Heart right ventricle (tissue), 16 donors: ENCODE measurements at regions of chr3 and their contacts with region 1.

Region 1: GRCh38 chr3:194141415-194142155 is 5.6 kb downstream of the HES1 start:
- DNase-seq: peak; percentile 93
- ATAC-seq: peak; percentile 66 to 89 (median 76)
- H3K4me3 ChIP-seq: peak overlapping the region in 8 of 10 donors; percentile 26 to 57 (median 52)
- H3K27ac ChIP-seq: peak overlapping the region; percentile 91 to 97 (median 94)
- H3K4me1 ChIP-seq: peaks cover 18 to 61% (median 47%) of the 10 kb centered on the region in 9 donors
- H3K27me3 ChIP-seq: peaks cover 0 to 76% (median 0%) of the 10 kb centered on the region in 7 donors
- CTCF ChIP-seq: peak in 3 of 9 donors; percentile 19 to 34 (median 24)

Region 2: GRCh38 chr3:192652727-192653126 is 1488.9 kb before region 1 on chr3:
- intact Hi-C with region 1: no loop called
- DNase-seq: no peak
- ATAC-seq: no peak
- H3K4me3 ChIP-seq: no peak overlapping the region
- H3K27ac ChIP-seq: peak overlapping the region in 9 of 10 donors; percentile 32 to 74 (median 63)
- H3K4me1 ChIP-seq: peaks cover 0 to 14% (median 6%) of the 10 kb centered on the region in 9 donors
- H3K27me3 ChIP-seq: no peaks in the 10 kb centered on the region
- CTCF ChIP-seq: no peak

Region 3: DNA sequence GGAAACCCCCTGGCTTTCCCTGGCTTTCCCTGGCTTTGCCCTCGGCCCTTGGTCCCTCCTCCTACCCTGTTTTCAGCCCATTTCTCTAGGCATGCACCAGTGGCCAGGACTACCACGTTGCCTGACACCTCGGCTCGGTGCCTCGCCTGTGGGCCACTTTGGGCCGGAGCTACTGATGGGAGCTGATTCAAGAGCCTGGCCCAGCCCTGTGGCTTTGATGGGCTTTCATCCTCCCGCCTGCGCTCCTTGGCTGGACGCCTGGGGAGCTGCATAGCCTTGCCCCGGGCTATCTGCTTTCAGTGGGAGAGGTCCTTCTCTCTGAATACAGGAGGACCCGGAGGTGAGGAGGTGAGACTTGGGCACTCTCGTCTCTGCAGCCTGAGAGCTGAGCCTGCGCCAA is 198.4 kb before region 1 on chr3:
- intact Hi-C with region 1: no loop called
- DNase-seq: no peak
- ATAC-seq: no peak
- H3K4me3 ChIP-seq: no peak overlapping the region
- H3K27ac ChIP-seq: no peak overlapping the region
- H3K4me1 ChIP-seq: peaks cover 0 to 9% (median 0%) of the 10 kb centered on the region in 9 donors
- H3K27me3 ChIP-seq: peaks cover 0 to 65% (median 15%) of the 10 kb centered on the region in 7 donors
- CTCF ChIP-seq: no peak

Region 4: DNA sequence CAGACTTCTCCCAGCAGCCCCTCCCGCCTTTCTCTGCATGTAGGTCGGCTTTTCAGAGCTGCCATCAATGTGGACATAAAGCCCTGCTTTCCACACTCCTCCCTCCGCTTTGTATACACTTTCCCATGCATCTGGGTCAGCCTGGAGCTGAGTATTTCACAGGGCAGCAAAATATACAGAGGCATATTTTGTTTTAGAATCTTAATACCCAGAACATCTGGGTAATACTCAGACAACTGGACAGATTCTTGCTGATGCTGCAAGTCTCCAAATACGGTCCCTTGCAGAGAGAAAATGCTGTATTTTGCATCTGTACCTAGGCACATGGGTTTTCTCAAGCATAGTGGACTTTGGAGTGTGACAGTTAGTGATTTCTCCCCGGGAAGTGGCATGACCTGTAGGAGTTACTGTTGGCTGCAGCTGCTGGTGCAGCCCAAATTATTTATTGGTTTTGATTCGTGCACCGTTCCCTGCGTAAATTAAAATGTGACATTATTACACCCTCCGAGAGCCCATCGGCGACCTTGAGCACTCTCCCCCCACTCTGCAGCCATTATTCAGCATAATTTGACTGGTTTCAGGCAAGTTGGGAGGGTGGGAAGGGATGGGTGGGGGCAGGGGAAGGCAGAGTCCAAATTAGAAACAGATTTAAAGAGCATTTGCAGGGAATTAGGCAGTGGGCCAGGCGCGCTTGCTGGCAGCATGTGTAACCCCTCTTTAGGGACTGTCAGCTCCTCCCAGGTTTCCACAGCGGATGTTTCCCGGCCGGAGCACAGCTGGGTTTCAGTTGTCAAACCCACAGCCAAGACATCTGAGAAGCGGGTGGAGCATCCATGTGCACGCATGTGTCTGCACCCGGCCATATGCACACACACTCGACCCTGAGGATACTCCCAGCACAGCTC is 108.8 kb after region 1 on chr3:
- intact Hi-C with region 1: loop called in 3 of 10 experiments (anchors 5 kb)
- DNase-seq: peak; percentile 87 to 88
- ATAC-seq: peak; percentile 70 to 81 (median 77)
- H3K4me3 ChIP-seq: peak overlapping the region in 6 of 10 donors; percentile 2 to 21 (median 10)
- H3K27ac ChIP-seq: peak overlapping the region in 2 of 10 donors; percentile 14 to 21
- H3K4me1 ChIP-seq: peaks cover 8 to 55% (median 37%) of the 10 kb centered on the region in 9 donors
- H3K27me3 ChIP-seq: peaks cover 0 to 12% (median 0%) of the 10 kb centered on the region in 7 donors
- CTCF ChIP-seq: no peak

Region 5: DNA sequence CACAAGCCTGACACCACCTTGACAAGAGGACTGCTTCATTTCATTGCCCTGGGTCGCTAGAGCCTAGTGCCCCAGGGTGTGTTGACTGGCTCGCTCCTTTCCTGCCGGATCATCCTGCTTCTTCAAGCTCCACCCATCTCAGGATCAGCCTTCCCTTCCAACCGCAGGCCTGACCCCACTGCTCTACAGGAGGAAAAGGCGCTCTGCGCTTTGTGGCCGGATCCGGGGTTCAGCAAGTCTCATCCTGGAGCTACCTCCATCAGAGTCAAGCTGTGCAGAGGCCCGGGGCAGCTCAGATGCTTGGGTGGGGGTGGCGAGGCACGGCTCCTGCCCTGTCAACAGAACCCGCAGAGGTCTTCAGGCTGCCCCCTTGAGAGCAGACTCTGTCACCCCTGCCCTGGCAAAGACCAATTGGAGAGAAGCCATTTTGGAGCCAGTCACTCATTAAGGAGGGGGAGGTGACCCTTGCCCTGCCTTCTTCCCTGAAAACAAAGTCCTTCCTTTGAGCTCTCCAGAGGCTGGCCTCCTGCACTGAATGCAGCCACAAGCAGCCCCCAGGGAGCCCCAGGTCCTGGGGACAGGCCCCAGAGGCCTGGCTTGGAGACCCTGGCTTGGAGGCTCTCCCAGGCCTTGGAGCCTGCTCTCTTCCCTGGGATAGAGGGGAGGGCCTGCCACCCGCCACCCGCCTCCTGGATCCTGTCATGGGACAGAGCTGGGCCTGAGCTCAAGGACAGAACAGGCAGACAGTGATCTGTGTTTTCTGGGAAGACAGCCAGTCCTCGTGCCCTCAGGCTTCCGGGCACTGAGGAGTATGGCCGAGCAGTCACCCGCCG is 129.3 kb after region 1 on chr3:
- intact Hi-C with region 1: loop called (anchors 1 to 5 kb)
- DNase-seq: peak; percentile 87 to 91
- ATAC-seq: peak; percentile 59 to 91 (median 78)
- H3K4me3 ChIP-seq: peak overlapping the region in 1 of 10 donors; percentile 3
- H3K27ac ChIP-seq: peak overlapping the region; percentile 81 to 93 (median 91)
- H3K4me1 ChIP-seq: peaks cover 37 to 83% (median 75%) of the 10 kb centered on the region in 9 donors
- H3K27me3 ChIP-seq: no peaks in the 10 kb centered on the region
- CTCF ChIP-seq: no peak

Region 6: GRCh38 chr3:194277104-194277785 is 135.7 kb after region 1 on chr3:
- intact Hi-C with region 1: loop called in 3 of 10 experiments (anchors 5 kb)
- DNase-seq: peak in 1 of 2 donors; percentile 61
- ATAC-seq: peak; percentile 44 to 70 (median 54)
- H3K4me3 ChIP-seq: no peak overlapping the region
- H3K27ac ChIP-seq: peak overlapping the region in 9 of 10 donors; percentile 26 to 76 (median 69)
- H3K4me1 ChIP-seq: peaks cover 19 to 57% (median 36%) of the 10 kb centered on the region in 9 donors
- H3K27me3 ChIP-seq: peaks cover 0 to 14% (median 0%) of the 10 kb centered on the region in 7 donors
- CTCF ChIP-seq: no peak